Ascending aorta (tissue), 2 donors: ENCODE measurements at regions of chr12 and their contacts with region 1.

Region 1: GRCh38 chr12:54005853-54006686 is 2.7 kb upstream of the HOXC8 start:
- DNase-seq: peak; percentile 31 to 94
- H3K4me3 ChIP-seq: peak overlapping the region in 1 of 2 donors; percentile 28
- H3K27ac ChIP-seq: no peak overlapping the region
- H3K4me1 ChIP-seq: peaks cover 0 to 11% of the 10 kb centered on the region in 2 donors
- H3K27me3 ChIP-seq: peaks cover 6% of the 10 kb centered on the region
- CTCF ChIP-seq: peak; percentile 93 to 96 (median 96)

Region 2: DNA sequence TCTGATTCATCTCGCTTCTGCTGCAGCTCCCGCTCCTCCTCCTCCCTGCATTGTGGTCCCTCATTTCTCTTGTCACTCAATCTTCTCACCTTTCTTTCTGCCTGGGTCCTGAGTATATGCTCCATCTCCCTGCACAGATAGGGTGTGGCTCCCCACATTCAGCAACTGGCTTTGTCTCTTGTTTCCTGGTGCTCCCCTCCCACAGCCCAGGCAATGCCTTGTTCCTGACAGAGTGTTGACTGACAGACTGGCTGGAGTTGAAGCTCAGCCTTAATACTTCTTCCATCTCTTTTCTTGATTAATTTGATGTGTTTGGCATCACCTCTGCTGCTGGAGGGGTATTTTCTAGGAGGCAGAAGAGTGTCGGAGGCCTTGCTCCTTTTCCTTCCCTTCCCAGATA is 82.5 kb before region 1 on chr12:
- intact Hi-C with region 1: no loop called
- DNase-seq: no peak
- H3K4me3 ChIP-seq: no peak overlapping the region
- H3K27ac ChIP-seq: no peak overlapping the region
- H3K4me1 ChIP-seq: peaks cover 0 to 3% of the 10 kb centered on the region in 2 donors
- H3K27me3 ChIP-seq: peaks cover 14% of the 10 kb centered on the region
- CTCF ChIP-seq: no peak

Region 3: DNA sequence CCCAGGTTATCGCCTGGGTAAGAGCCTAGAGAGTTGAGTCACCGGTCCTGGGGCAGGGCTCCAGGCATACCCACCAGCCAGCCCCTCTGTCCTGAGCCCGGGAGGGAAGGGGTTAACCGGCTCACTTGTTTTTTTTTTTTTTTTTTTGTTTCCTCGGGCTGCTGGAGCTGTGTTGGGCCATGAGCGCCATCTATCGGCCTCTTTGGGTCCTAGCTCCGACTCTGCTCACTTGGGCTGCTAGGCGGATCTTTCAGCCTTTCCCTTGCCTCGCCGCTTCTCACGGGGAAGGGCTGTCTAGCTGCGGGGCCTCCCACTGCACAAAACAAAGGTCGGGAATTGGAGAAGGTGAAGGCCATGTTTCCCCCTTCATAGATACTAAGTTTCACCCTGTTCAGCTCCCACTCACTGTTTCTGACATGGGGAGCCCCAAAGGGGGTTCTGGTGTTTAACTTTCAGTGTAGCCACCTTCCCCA is 185.5 kb after region 1 on chr12:
- intact Hi-C with region 1: loop called (anchors 1 kb)
- DNase-seq: peak in 1 of 2 donors; percentile 88
- H3K4me3 ChIP-seq: no peak overlapping the region
- H3K27ac ChIP-seq: no peak overlapping the region
- H3K4me1 ChIP-seq: peaks cover 0 to 7% of the 10 kb centered on the region in 2 donors
- H3K27me3 ChIP-seq: no peaks in the 10 kb centered on the region
- CTCF ChIP-seq: peak; percentile 58 to 78 (median 66)

Region 4: DNA sequence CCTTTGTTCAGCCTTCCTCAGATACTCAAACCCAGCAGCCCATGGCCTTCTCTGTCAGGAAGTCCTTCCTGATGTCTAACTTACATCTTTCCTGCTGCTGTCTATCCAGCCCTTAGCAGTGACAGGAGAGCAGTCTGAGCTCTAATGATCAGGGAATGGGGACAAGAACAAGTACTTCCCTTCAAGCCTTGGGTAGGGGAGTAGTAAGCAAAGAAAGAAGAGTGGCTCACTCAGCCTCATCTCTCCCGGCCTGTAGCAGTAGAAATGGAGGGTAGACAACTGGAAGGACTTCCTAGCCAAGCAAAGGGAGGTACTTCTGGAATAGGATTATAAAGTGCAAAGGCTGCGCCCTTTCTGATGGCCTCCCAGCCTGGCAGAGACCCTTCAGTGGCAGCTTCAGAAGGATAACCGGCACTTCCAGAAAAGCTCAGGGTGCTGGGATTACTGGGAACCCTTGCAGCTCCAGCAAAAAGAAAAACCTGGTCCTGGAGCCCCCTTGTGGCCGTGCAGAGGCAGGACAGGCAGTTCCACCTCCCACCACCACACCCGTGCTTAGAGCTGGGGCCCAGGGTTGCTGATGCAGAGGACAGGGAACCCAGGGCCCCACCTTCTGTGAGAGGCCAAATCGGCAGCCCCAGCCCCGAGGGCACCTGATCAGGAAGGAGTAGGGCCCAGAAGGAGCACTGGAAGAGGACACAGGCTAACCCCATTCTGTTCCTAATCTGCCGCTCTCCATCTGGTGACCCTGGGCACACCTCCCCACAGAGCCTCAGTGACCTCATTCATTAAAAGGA is 195.1 kb after region 1 on chr12:
- intact Hi-C with region 1: loop called (anchors 2 kb)
- DNase-seq: peak in 1 of 2 donors; percentile 76
- H3K4me3 ChIP-seq: no peak overlapping the region
- H3K27ac ChIP-seq: no peak overlapping the region
- H3K4me1 ChIP-seq: no peaks in the 10 kb centered on the region
- H3K27me3 ChIP-seq: peaks cover 5% of the 10 kb centered on the region
- CTCF ChIP-seq: peak; percentile 87 to 97 (median 87)

Region 5: DNA sequence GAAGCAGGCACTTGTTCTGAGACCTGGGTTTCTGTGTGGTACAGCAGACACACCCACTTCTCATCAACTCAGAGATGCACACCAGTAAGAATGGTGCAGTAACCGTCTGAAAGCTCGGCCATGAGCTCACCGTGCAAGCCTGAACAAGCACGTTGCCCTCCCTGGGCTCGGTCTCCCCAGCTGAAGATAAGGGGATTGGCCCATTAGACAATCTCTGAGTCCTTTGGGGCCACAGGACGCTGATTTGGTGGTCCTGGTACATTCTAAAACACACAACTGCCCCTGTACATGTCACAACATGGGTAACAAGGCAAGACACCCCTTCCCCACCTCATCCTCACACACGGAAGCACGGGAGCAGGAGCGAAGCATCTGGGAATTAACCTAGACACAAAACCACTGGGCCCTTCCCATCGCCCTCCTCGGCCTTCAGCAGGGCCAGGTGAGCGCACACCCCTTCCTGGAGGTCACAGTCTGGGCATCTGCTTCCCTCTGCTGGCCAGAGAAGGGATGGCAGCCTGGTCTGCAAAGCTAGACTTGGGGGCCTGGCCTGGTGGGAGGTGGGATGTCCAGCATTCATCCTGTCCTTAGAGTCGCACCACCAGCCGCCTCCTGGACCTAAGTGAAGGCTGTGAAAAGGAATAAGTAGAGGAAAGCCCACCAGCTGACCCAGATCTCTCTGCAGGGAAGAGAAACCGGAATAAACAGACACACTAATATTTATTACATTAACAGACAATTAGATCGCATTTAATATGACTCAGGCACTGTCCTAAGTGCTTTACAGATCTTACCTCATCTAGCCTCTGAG is 201.6 kb after region 1 on chr12:
- intact Hi-C with region 1: loop called (anchors 1 kb)
- DNase-seq: peak in 1 of 2 donors; percentile 88
- H3K4me3 ChIP-seq: no peak overlapping the region
- H3K27ac ChIP-seq: no peak overlapping the region
- H3K4me1 ChIP-seq: no peaks in the 10 kb centered on the region
- H3K27me3 ChIP-seq: no peaks in the 10 kb centered on the region
- CTCF ChIP-seq: peak; percentile 76 to 92 (median 91)